H1 (cell line): ENCODE measurements at regions of chr7 and their contacts with region 1.

Region 1: DNA sequence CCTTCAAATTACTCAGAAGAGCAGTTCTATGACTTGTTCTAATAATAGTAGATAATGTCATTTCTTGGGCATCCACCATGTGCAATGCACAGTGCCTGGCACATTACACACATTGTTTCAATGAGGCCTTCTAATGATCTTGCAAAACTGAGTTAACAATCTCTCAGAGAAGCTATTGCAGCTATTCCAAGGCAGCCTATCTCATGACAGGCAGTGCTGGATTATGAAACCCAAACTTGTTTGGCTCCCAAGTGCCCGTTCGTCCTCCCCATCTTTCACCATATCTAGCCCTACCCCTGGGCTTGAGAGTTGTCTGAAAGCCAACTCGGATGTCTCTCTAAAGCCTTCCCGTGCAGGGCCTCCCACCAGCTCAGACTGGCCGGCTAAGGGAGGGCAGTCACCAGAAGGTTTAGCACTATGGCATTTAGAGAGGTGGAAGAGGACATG is 405.1 kb downstream of the PLXNA4 start:
- DNase-seq: no peak
- H3K4me3 ChIP-seq: no peak overlapping the region
- H3K27ac ChIP-seq: no peak overlapping the region
- H3K4me1 ChIP-seq: no peaks in the 10 kb centered on the region; a peak in 2 of 7 replicates
- H3K27me3 ChIP-seq: no peaks in the 10 kb centered on the region
- CTCF ChIP-seq: no peak
- EP300 ChIP-seq: no peak
- POLR2A ChIP-seq: no peak
- RAD21 ChIP-seq: no peak

Region 2: DNA sequence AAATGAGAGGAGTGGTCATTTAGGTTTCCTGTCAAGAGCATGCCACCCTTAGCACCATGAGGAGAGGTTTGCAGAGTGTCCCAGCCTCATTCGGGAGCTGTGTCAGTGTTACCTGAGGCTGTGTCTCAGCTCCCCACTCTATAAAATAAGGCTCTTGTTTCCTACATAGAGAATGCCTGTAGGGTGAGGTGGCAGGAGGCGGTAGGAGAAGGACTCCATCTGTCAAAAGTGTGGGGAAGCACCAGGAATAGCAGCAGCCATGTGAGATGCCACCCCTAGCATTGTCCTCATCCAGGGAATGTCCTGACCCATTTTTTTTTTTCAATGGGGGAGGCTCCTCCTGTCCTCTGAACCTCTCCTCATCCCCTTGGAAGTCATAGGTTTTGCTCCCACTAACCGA is 46.1 kb before region 1 on chr7:
- CTCF ChIA-PET with region 1: no interaction called
- POLR2A ChIA-PET with region 1: no interaction called
- DNase-seq: no peak
- H3K4me3 ChIP-seq: no peak overlapping the region
- H3K27ac ChIP-seq: no peak overlapping the region
- H3K4me1 ChIP-seq: peaks cover 0 to 4% (median 0%) of the 10 kb centered on the region in 4 experiments; a peak in 4 of 7 replicates
- H3K27me3 ChIP-seq: no peaks in the 10 kb centered on the region
- CTCF ChIP-seq: no peak
- EP300 ChIP-seq: no peak
- POLR2A ChIP-seq: no peak
- RAD21 ChIP-seq: no peak

Region 3: GRCh38 chr7:132141109-132141508 is 30.0 kb before region 1 on chr7:
- CTCF ChIA-PET with region 1: no interaction called
- POLR2A ChIA-PET with region 1: no interaction called
- DNase-seq: no peak
- H3K4me3 ChIP-seq: no peak overlapping the region
- H3K27ac ChIP-seq: no peak overlapping the region
- H3K4me1 ChIP-seq: peaks cover 1 to 11% (median 6%) of the 10 kb centered on the region in 4 experiments; a peak in 5 of 7 replicates
- H3K27me3 ChIP-seq: no peaks in the 10 kb centered on the region
- CTCF ChIP-seq: no peak
- EP300 ChIP-seq: no peak
- POLR2A ChIP-seq: no peak
- RAD21 ChIP-seq: no peak

Region 4: DNA sequence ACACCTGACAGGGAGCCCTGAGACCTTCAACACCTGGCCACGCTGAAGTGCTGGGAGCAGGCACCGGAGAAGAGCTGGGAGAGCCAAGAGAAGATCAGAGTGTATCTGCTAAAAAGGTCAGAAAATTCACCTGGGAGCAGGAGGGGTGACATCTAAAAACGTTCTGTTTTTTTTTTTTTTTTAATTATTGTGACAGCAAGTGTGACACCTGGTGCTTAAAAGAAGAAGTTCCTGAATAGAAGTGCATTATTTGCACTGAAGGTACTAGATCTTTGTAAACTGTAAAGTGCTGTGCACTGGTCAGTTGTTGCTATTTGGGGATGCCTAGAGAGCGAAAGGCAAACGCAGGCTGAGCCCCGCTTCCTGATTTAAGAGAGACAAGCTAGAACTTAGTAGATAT is 16.9 kb before region 1 on chr7:
- CTCF ChIA-PET with region 1: interaction called, 11 read pairs
- POLR2A ChIA-PET with region 1: no interaction called
- DNase-seq: no peak
- H3K4me3 ChIP-seq: no peak overlapping the region
- H3K27ac ChIP-seq: no peak overlapping the region
- H3K4me1 ChIP-seq: peaks cover 0 to 9% (median 1%) of the 10 kb centered on the region in 4 experiments; a peak in 5 of 7 replicates
- H3K27me3 ChIP-seq: no peaks in the 10 kb centered on the region
- CTCF ChIP-seq: no peak; a peak in 1 of 4 replicates
- EP300 ChIP-seq: no peak
- POLR2A ChIP-seq: no peak
- RAD21 ChIP-seq: no peak

Region 5: GRCh38 chr7:132187869-132188789 is 17.0 kb after region 1 on chr7:
- CTCF ChIA-PET with region 1: interaction called, 16 read pairs
- POLR2A ChIA-PET with region 1: interaction called, 7 read pairs
- DNase-seq: peak; percentile 72 to 77
- H3K4me3 ChIP-seq: peak overlapping the region in 2 of 4 experiments; percentile 8 to 30; a peak in 1 of 8 replicates
- H3K27ac ChIP-seq: peak overlapping the region; percentile 64; the same call in 1 of the 2 replicates
- H3K4me1 ChIP-seq: peaks cover 18 to 36% (median 25%) of the 10 kb centered on the region in 4 experiments
- H3K27me3 ChIP-seq: no peaks in the 10 kb centered on the region
- CTCF ChIP-seq: no peak
- EP300 ChIP-seq: peak in 1 of 2 experiments; percentile 84; a peak in 1 of 3 replicates
- POLR2A ChIP-seq: peak in 1 of 2 experiments; percentile 48; a peak in 1 of 3 replicates
- RAD21 ChIP-seq: peak in 1 of 2 experiments; percentile 24; a peak in 1 of 4 replicates

Region 6: DNA sequence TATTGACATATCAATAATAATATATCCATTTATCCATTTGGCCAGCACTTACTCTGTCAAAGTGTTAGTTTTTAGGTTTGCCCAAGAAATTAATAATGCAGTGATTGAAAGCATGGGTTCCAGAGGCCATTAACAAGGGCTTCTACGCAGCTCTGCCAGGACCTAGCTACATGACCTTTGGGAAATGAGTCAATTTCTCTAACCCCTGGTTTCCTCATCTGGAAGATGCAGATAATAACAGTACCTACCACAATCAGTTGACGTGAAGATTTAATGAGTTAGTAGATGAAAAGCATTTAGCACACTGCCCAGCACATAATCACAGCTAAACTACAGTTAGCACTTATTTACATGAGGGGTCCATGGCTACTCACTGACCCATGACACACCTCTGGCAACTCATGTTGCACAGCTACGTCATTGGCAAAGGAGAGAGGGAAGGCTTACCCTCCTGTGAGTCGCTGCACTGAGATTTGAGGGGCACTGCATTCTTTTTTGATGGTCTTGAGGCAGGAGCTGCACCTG is 141.4 kb after region 1 on chr7:
- CTCF ChIA-PET with region 1: no interaction called
- POLR2A ChIA-PET with region 1: no interaction called
- DNase-seq: no peak
- H3K4me3 ChIP-seq: no peak overlapping the region
- H3K27ac ChIP-seq: no peak overlapping the region
- H3K4me1 ChIP-seq: no peaks in the 10 kb centered on the region
- H3K27me3 ChIP-seq: no peaks in the 10 kb centered on the region; a peak in 1 of 7 replicates
- CTCF ChIP-seq: no peak
- EP300 ChIP-seq: no peak
- POLR2A ChIP-seq: no peak
- RAD21 ChIP-seq: no peak